ENCODE measurements at regions of chrX and their contacts with region 1.

Region 1: GRCh38 chrX:14406225-14406624 is 123.1 kb upstream of the GLRA2 start:
- DNase-seq: no peak
- H3K4me3 ChIP-seq: no peak overlapping the region
- H3K27ac ChIP-seq: no peak overlapping the region
- H3K4me1 ChIP-seq: no peaks in the 10 kb centered on the region
- H3K27me3 ChIP-seq: no peaks in the 10 kb centered on the region
- CTCF ChIP-seq: no peak
- POLR2A ChIP-seq: no peak

Region 2: DNA sequence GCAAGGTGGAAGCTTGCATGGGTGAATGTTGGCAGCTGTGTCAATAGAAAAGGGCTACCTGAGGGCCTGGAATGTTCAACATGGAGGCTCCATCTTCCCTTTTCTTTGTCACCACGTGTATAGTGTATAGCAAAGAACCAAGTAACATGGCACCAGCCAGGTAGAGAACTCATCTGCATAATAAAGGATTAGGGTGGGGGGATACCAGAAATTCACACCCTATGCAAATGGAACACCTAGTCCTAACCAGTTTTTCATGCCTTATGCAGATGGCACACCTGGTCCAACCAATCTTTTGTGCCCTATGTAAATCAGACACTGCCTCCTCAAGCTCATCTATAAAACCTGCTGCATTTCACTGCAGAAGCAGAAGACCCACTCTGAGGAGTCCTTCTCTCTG is 46.5 kb before region 1 on chrX:
- intact Hi-C with region 1: loop called (anchors 2 kb)
- DNase-seq: no peak
- H3K4me3 ChIP-seq: no peak overlapping the region
- H3K27ac ChIP-seq: no peak overlapping the region
- H3K4me1 ChIP-seq: no peaks in the 10 kb centered on the region
- H3K27me3 ChIP-seq: no peaks in the 10 kb centered on the region
- CTCF ChIP-seq: no peak
- POLR2A ChIP-seq: no peak

Measured in vagina (tissue), 2 donors.